PC-3 (cell line): ENCODE measurements at regions of chr3 and their contacts with region 1.

Region 1: GRCh38 chr3:102235679-102236078 is 199.1 kb upstream of the ZPLD1 start:
- DNase-seq: peak; percentile 57
- ATAC-seq: no peak
- H3K4me3 ChIP-seq: no peak overlapping the region
- H3K27ac ChIP-seq: no peak overlapping the region
- H3K4me1 ChIP-seq: peaks cover 56% of the 10 kb centered on the region
- H3K27me3 ChIP-seq: no peaks in the 10 kb centered on the region
- CTCF ChIP-seq: peak; percentile 85

Region 2: GRCh38 chr3:101632586-101632985 is 603.1 kb before region 1 on chr3:
- CTCF ChIA-PET with region 1: no interaction called
- POLR2A ChIA-PET with region 1: no interaction called
- intact Hi-C with region 1: no loop called
- DNase-seq: no peak
- ATAC-seq: no peak
- H3K4me3 ChIP-seq: no peak overlapping the region
- H3K27ac ChIP-seq: no peak overlapping the region
- H3K4me1 ChIP-seq: no peaks in the 10 kb centered on the region
- H3K27me3 ChIP-seq: no peaks in the 10 kb centered on the region
- CTCF ChIP-seq: no peak

Region 3: GRCh38 chr3:102124301-102125158 is 111.1 kb before region 1 on chr3:
- CTCF ChIA-PET with region 1: no interaction called
- POLR2A ChIA-PET with region 1: no interaction called
- intact Hi-C with region 1: no loop called
- DNase-seq: peak; percentile 52
- ATAC-seq: peak; percentile 49
- H3K4me3 ChIP-seq: no peak overlapping the region
- H3K27ac ChIP-seq: peak overlapping the region; percentile 88
- H3K4me1 ChIP-seq: peaks cover 35% of the 10 kb centered on the region
- H3K27me3 ChIP-seq: no peaks in the 10 kb centered on the region
- CTCF ChIP-seq: no peak

Region 4: GRCh38 chr3:102332205-102332604 is 96.5 kb after region 1 on chr3:
- CTCF ChIA-PET with region 1: no interaction called
- POLR2A ChIA-PET with region 1: interaction called, 5 read pairs
- intact Hi-C with region 1: loop called (anchors 1 kb)
- DNase-seq: peak; percentile 59
- ATAC-seq: peak; percentile 48; the same call in 1 of the 2 replicates
- H3K4me3 ChIP-seq: no peak overlapping the region
- H3K27ac ChIP-seq: no peak overlapping the region
- H3K4me1 ChIP-seq: peaks cover 27% of the 10 kb centered on the region
- H3K27me3 ChIP-seq: no peaks in the 10 kb centered on the region
- CTCF ChIP-seq: no peak

Region 5: GRCh38 chr3:102400766-102401165 is 165.1 kb after region 1 on chr3:
- CTCF ChIA-PET with region 1: no interaction called
- POLR2A ChIA-PET with region 1: interaction called, 5 read pairs
- intact Hi-C with region 1: loop called (anchors 1 kb)
- DNase-seq: peak; percentile 94
- ATAC-seq: peak; percentile 94
- H3K4me3 ChIP-seq: peak overlapping the region; percentile 10; the same call in 1 of the 2 replicates
- H3K27ac ChIP-seq: peak overlapping the region; percentile 86
- H3K4me1 ChIP-seq: peaks cover 34% of the 10 kb centered on the region
- H3K27me3 ChIP-seq: no peaks in the 10 kb centered on the region
- CTCF ChIP-seq: no peak

Region 6: GRCh38 chr3:102484384-102484783 is 248.7 kb after region 1 on chr3:
- CTCF ChIA-PET with region 1: no interaction called
- POLR2A ChIA-PET with region 1: no interaction called
- intact Hi-C with region 1: loop called (anchors 2 kb)
- DNase-seq: peak; percentile 33
- ATAC-seq: no peak
- H3K4me3 ChIP-seq: no peak overlapping the region
- H3K27ac ChIP-seq: peak overlapping the region; percentile 89
- H3K4me1 ChIP-seq: peaks cover 32% of the 10 kb centered on the region
- H3K27me3 ChIP-seq: no peaks in the 10 kb centered on the region
- CTCF ChIP-seq: no peak

Region 7: GRCh38 chr3:102536456-102536855 is 300.8 kb after region 1 on chr3:
- CTCF ChIA-PET with region 1: interaction called, 27 read pairs
- POLR2A ChIA-PET with region 1: interaction called, 3 read pairs
- intact Hi-C with region 1: loop called (anchors 1 kb)
- DNase-seq: peak; percentile 84
- ATAC-seq: peak; percentile 82
- H3K4me3 ChIP-seq: no peak overlapping the region
- H3K27ac ChIP-seq: no peak overlapping the region
- H3K4me1 ChIP-seq: peaks cover 19% of the 10 kb centered on the region
- H3K27me3 ChIP-seq: no peaks in the 10 kb centered on the region
- CTCF ChIP-seq: peak; percentile 76